ENCODE measurements at regions of chr5 and their contacts with region 1.

Region 1: GRCh38 chr5:37615184-37615583 is 224.7 kb downstream of the GDNF start:
- DNase-seq: no peak
- H3K4me3 Mint-ChIP-seq: no peak overlapping the region
- H3K27ac Mint-ChIP-seq: no peak overlapping the region
- H3K4me1 Mint-ChIP-seq: no peaks in the 10 kb centered on the region
- H3K27me3 Mint-ChIP-seq: no peaks in the 10 kb centered on the region
- CTCF ChIP-seq: no peak

Region 2: DNA sequence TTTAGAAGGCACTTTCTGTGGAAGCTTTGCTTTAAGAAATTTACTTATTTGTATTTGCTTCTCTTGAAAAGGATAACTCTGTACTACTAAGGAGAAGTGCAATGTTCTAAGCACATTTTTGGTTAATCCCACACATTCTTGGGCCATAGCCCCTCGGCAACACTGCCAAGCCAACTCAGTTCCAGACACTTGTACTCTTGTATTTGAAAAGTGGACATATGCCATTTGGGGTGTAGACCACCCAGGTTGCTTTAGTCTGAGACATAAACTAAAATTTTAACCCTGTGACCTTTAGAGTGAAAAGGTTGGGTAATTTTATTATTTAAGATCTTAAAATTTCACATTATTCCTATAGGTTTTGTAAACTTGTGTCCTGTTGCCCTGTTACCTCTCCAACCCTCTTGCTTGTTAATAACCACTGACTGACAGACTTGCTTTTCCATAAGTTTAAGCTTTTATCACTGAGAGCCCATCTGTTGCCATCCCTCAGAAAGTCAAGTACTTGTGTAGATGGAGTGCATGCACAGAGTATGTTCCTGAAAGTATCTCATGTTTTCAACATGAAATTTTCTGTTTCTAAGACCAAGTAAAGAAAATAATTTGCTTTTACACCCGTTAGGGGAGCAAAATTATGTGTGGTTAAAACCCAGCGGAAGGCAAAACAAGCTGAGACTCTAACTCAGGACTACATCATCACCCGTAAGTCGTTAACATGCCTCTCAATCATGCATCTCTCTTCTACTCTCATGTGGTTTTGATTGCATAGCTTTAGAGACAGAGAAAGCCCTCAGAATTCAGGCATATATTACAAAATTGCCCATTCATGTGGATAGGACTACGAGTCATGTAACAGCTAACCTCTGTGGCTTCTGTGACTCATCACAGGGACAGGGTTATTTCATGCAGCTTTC is 107.3 kb after region 1 on chr5:
- CTCF ChIA-PET with region 1: interaction called, 15 read pairs
- intact Hi-C with region 1: no loop called
- DNase-seq: no peak
- H3K4me3 Mint-ChIP-seq: no peak overlapping the region
- H3K27ac Mint-ChIP-seq: no peak overlapping the region
- H3K4me1 Mint-ChIP-seq: peaks cover 14% of the 10 kb centered on the region
- H3K27me3 Mint-ChIP-seq: no peaks in the 10 kb centered on the region
- CTCF ChIP-seq: no peak

Region 3: GRCh38 chr5:37739817-37740261 is 124.7 kb after region 1 on chr5:
- CTCF ChIA-PET with region 1: no interaction called
- intact Hi-C with region 1: no loop called
- DNase-seq: no peak
- H3K4me3 Mint-ChIP-seq: no peak overlapping the region
- H3K27ac Mint-ChIP-seq: no peak overlapping the region
- H3K4me1 Mint-ChIP-seq: peaks cover 11% of the 10 kb centered on the region
- H3K27me3 Mint-ChIP-seq: no peaks in the 10 kb centered on the region
- CTCF ChIP-seq: no peak

Measured in Calu3 (cell line).